ENCODE measurements at regions of chr1 and their contacts with region 1.

Region 1: GRCh38 chr1:60872426-60873054 is 209.8 kb upstream of the NFIA start:
- DNase-seq: no peak
- ATAC-seq: no peak
- H3K4me3 ChIP-seq: no peak overlapping the region
- H3K27ac ChIP-seq: no peak overlapping the region
- H3K4me1 ChIP-seq: peaks cover 9% of the 10 kb centered on the region
- H3K27me3 ChIP-seq: no peaks in the 10 kb centered on the region
- CTCF ChIP-seq: no peak

Region 2: GRCh38 chr1:60891765-60892164 is 19.2 kb after region 1 on chr1:
- intact Hi-C with region 1: loop called in 1 of 2 experiments (anchors 1 kb)
- DNase-seq: no peak
- ATAC-seq: no peak
- H3K4me3 ChIP-seq: no peak overlapping the region
- H3K27ac ChIP-seq: no peak overlapping the region
- H3K4me1 ChIP-seq: peaks cover 12% of the 10 kb centered on the region
- H3K27me3 ChIP-seq: no peaks in the 10 kb centered on the region
- CTCF ChIP-seq: no peak